CD8-positive, alpha-beta T cell (primary cell): ENCODE measurements at regions of chr12 and their contacts with region 1.

Region 1: DNA sequence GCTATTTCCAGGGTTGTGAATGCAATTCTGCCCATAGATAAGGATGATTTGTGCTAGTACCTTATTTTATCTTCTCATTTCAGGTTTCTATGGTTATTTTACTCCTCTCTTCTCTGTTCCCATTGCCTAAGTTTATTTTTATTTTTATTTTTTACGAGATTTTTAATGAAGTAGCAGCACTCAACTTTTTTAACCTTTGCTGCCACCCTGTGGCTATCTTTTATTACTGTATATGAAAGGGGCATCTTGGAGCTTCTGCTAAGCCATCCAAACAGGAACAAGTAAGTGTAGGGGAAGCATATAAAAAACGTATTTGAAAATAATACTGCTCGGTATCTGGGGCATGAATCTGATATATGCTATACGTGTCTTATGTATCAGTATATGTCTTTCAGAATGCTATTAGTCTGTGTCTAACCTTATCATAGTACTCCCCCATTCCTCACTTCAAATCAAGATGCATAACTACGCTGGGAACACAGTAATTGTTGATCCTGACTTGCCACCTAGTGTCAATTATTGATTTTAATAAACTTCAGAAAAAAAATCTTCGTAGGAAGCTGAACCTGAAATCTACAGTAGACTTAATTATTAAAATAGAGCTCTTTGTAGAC is 60.3 kb downstream of the KLRG1 start:
- DNase-seq: peak in 4 of 9 experiments; percentile 30 to 76 (median 56)
- ATAC-seq: peak; percentile 83
- H3K4me3 ChIP-seq: no peak overlapping the region
- H3K4me3 Mint-ChIP-seq: no peak overlapping the region
- H3K27ac ChIP-seq: no peak overlapping the region
- H3K27ac Mint-ChIP-seq: no peak overlapping the region
- H3K4me1 ChIP-seq: peaks cover 5% of the 10 kb centered on the region
- H3K4me1 Mint-ChIP-seq: peaks cover 29% of the 10 kb centered on the region
- H3K27me3 ChIP-seq: no peaks in the 10 kb centered on the region
- H3K27me3 Mint-ChIP-seq: no peaks in the 10 kb centered on the region
- CTCF ChIP-seq: peak; percentile 85

Region 2: GRCh38 chr12:8662593-8662992 is 387.0 kb before region 1 on chr12 and contains the start of gene MFAP5:
- CTCF ChIA-PET with region 1: interaction called, 5 read pairs
- POLR2A ChIA-PET with region 1: no interaction called
- intact Hi-C with region 1: loop called in 1 of 2 experiments (anchors 1 kb)
- DNase-seq: no peak
- ATAC-seq: no peak
- H3K4me3 ChIP-seq: no peak within 1 kb of the TSS
- H3K4me3 Mint-ChIP-seq: no peak within 1 kb of the TSS
- H3K27ac ChIP-seq: no peak within 1 kb of the TSS
- H3K27ac Mint-ChIP-seq: no peak within 1 kb of the TSS
- H3K4me1 ChIP-seq: no peaks in the 10 kb centered on the region
- H3K4me1 Mint-ChIP-seq: no peaks in the 10 kb centered on the region
- H3K27me3 ChIP-seq: no peaks in the 10 kb centered on the region
- H3K27me3 Mint-ChIP-seq: peaks cover 7% of the 10 kb centered on the region
- CTCF ChIP-seq: no peak
- total RNA-seq, gene MFAP5: not detected

Region 3: GRCh38 chr12:8860165-8860961 is 189.3 kb before region 1 on chr12:
- CTCF ChIA-PET with region 1: interaction called, 14 read pairs
- POLR2A ChIA-PET with region 1: no interaction called
- intact Hi-C with region 1: no loop called
- DNase-seq: peak in 8 of 9 experiments; percentile 10 to 64 (median 29)
- ATAC-seq: peak; percentile 51
- H3K4me3 ChIP-seq: no peak overlapping the region
- H3K4me3 Mint-ChIP-seq: no peak overlapping the region
- H3K27ac ChIP-seq: no peak overlapping the region
- H3K27ac Mint-ChIP-seq: no peak overlapping the region
- H3K4me1 ChIP-seq: no peaks in the 10 kb centered on the region
- H3K4me1 Mint-ChIP-seq: no peaks in the 10 kb centered on the region
- H3K27me3 ChIP-seq: no peaks in the 10 kb centered on the region
- H3K27me3 Mint-ChIP-seq: no peaks in the 10 kb centered on the region
- CTCF ChIP-seq: peak; percentile 53

Region 4: DNA sequence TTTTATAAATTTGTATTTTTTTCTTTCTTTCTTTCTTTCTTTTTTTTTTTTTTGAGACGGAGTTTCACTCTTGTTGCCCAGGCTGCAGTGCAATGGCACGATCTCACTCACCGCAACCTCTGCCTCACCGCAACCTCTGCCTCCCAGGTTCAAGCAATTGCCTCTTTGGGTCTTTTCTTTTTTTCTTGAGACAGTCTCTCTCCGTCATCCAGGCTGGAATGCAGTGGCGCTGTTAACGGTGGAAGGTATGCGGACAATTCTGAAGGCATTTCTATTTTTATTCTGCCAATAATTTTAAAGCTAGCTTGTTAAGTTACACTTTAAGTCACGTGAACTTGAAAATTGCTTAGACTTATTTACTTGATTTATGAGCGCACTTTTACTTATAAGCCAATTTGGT is 144.1 kb before region 1 on chr12:
- CTCF ChIA-PET with region 1: interaction called, 13 read pairs
- POLR2A ChIA-PET with region 1: no interaction called
- intact Hi-C with region 1: no loop called
- DNase-seq: no peak
- ATAC-seq: no peak
- H3K4me3 ChIP-seq: no peak overlapping the region
- H3K4me3 Mint-ChIP-seq: no peak overlapping the region
- H3K27ac ChIP-seq: no peak overlapping the region
- H3K27ac Mint-ChIP-seq: no peak overlapping the region
- H3K4me1 ChIP-seq: no peaks in the 10 kb centered on the region
- H3K4me1 Mint-ChIP-seq: no peaks in the 10 kb centered on the region
- H3K27me3 ChIP-seq: no peaks in the 10 kb centered on the region
- H3K27me3 Mint-ChIP-seq: peaks cover 3% of the 10 kb centered on the region
- CTCF ChIP-seq: no peak

Region 5: GRCh38 chr12:8949342-8950220 is 100.0 kb before region 1 on chr12 and contains the start of gene M6PR:
- CTCF ChIA-PET with region 1: interaction called, 224 read pairs
- POLR2A ChIA-PET with region 1: interaction called, 23 read pairs
- intact Hi-C with region 1: loop called (anchors 2 kb)
- DNase-seq: peak; percentile 71 to 95 (median 88)
- ATAC-seq: peak; percentile 72
- H3K4me3 ChIP-seq: peak within 1 kb of the TSS; percentile 97 to 98
- H3K4me3 Mint-ChIP-seq: peak within 1 kb of the TSS; percentile 94
- H3K27ac ChIP-seq: peak within 1 kb of the TSS; percentile 96 to 100
- H3K27ac Mint-ChIP-seq: peak within 1 kb of the TSS; percentile 95
- H3K4me1 ChIP-seq: peaks cover 58% of the 10 kb centered on the region
- H3K4me1 Mint-ChIP-seq: peaks cover 68% of the 10 kb centered on the region
- H3K27me3 ChIP-seq: no peaks in the 10 kb centered on the region
- H3K27me3 Mint-ChIP-seq: no peaks in the 10 kb centered on the region
- CTCF ChIP-seq: peak; percentile 48
- total RNA-seq, gene M6PR: 43.1 to 43.7 TPM

Region 6: GRCh38 chr12:9064201-9064814 is 14.7 kb after region 1 on chr12:
- CTCF ChIA-PET with region 1: interaction called, 13 read pairs
- POLR2A ChIA-PET with region 1: interaction called, 3 read pairs
- intact Hi-C with region 1: no loop called
- DNase-seq: peak in 8 of 9 experiments; percentile 26 to 70 (median 54)
- ATAC-seq: peak; percentile 91
- H3K4me3 ChIP-seq: peak overlapping the region; percentile 45 to 54
- H3K4me3 Mint-ChIP-seq: peak overlapping the region; percentile 83
- H3K27ac ChIP-seq: no peak overlapping the region
- H3K27ac Mint-ChIP-seq: peak overlapping the region; percentile 30
- H3K4me1 ChIP-seq: peaks cover 6% of the 10 kb centered on the region
- H3K4me1 Mint-ChIP-seq: peaks cover 11% of the 10 kb centered on the region
- H3K27me3 ChIP-seq: no peaks in the 10 kb centered on the region
- H3K27me3 Mint-ChIP-seq: no peaks in the 10 kb centered on the region
- CTCF ChIP-seq: peak; percentile 31